GM23248 (cell line): ENCODE measurements at regions of chr20 and their contacts with region 1.

Region 1: GRCh38 chr20:56540420-56540819 is 7.4 kb downstream of the FAM209B start:
- DNase-seq: peak; percentile 45
- H3K4me3 ChIP-seq: no peak overlapping the region
- H3K27ac ChIP-seq: no peak overlapping the region
- H3K4me1 ChIP-seq: no peaks in the 10 kb centered on the region
- H3K27me3 ChIP-seq: no peaks in the 10 kb centered on the region

Region 2: GRCh38 chr20:56964888-56965287 is 424.5 kb after region 1 on chr20:
- in situ Hi-C with region 1: no loop called
- DNase-seq: no peak
- H3K4me3 ChIP-seq: no peak overlapping the region
- H3K27ac ChIP-seq: no peak overlapping the region
- H3K4me1 ChIP-seq: no peaks in the 10 kb centered on the region
- H3K27me3 ChIP-seq: peaks cover 14% of the 10 kb centered on the region

Region 3: GRCh38 chr20:57056651-57057050 is 516.2 kb after region 1 on chr20:
- in situ Hi-C with region 1: loop called (anchors 10 kb)
- DNase-seq: no peak
- H3K4me3 ChIP-seq: no peak overlapping the region
- H3K27ac ChIP-seq: no peak overlapping the region
- H3K4me1 ChIP-seq: 0 out of 2 replicates have a peak, but pooled peaks cover 7% of the 10 kb centered on the region
- H3K27me3 ChIP-seq: peaks cover 14% of the 10 kb centered on the region; the same call in 1 of the 2 replicates